Common myeloid progenitor, CD34-positive (primary cell): ENCODE measurements at regions of chr1 and their contacts with region 1.

Region 1: DNA sequence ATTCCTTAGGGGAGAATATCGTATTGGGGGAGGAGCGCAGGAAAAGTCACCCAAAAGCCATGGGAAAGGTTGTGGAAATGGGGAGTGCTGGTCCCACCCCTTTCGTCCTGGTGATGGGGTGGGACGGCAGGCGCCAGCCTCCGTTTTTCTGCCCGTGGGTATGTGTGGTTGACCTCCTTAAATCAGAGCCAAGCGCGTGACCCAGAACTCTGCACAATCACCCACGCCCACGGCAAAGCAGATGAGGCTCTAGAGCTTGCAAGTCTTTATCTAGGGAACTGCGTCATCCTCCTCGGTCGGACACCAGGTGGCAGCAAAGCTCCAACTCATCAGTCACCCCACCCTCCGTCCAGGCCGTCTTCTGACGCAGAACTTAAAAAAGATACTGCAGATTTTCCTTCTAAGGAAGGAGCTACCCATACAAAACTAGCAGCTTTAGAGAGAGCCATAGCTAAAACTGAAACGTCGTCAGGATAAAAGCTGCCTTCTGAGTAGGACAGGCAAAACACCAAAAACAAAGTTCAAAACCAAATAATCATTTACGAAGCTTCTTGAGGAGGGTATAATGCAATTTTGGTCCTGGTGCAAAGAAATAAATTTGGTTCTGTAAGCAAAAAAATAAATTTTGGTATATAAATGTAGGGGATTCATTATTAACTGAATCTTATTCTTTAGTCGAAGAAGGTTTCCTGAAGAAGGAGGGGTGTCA is 62.0 kb downstream of the TBX19 start:
- DNase-seq: peak; percentile 91 to 95 (median 93)
- H3K4me3 ChIP-seq: peak overlapping the region in 5 of 7 experiments; percentile 5 to 49 (median 19)
- H3K27ac ChIP-seq: no peak overlapping the region
- H3K4me1 ChIP-seq: peaks cover 0 to 6% (median 6%) of the 10 kb centered on the region in 4 experiments
- H3K27me3 ChIP-seq: no peaks in the 10 kb centered on the region

Region 2: DNA sequence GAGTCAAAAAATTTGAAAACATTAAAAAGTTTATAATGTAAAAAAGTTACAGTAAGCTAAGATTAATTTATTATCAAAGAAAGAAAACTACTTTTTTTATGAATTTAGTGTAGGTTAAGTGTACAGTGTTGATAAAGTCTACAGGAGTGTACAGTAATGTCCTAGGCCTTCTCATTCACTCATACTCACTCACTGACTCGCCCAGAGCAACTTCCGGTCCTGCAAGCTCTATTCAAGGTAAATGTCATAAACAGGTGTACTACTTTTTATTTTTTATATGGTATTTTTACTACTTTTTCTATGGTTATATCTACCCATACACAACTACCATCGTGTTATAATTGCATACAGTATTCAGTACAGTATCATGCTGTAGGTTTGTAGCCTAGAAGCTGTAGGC is 12.4 kb before region 1 on chr1:
- CTCF ChIA-PET with region 1: interaction called, 13 read pairs
- POLR2A ChIA-PET with region 1: no interaction called
- DNase-seq: no peak
- H3K4me3 ChIP-seq: no peak overlapping the region
- H3K27ac ChIP-seq: no peak overlapping the region
- H3K4me1 ChIP-seq: no peaks in the 10 kb centered on the region
- H3K27me3 ChIP-seq: no peaks in the 10 kb centered on the region

Region 3: GRCh38 chr1:168360151-168361021 is 17.7 kb after region 1 on chr1:
- CTCF ChIA-PET with region 1: interaction called, 38 read pairs
- POLR2A ChIA-PET with region 1: interaction called, 3 read pairs
- DNase-seq: no peak
- H3K4me3 ChIP-seq: no peak overlapping the region
- H3K27ac ChIP-seq: no peak overlapping the region
- H3K4me1 ChIP-seq: peaks cover 0 to 8% (median 0%) of the 10 kb centered on the region in 4 experiments
- H3K27me3 ChIP-seq: no peaks in the 10 kb centered on the region

Region 4: DNA sequence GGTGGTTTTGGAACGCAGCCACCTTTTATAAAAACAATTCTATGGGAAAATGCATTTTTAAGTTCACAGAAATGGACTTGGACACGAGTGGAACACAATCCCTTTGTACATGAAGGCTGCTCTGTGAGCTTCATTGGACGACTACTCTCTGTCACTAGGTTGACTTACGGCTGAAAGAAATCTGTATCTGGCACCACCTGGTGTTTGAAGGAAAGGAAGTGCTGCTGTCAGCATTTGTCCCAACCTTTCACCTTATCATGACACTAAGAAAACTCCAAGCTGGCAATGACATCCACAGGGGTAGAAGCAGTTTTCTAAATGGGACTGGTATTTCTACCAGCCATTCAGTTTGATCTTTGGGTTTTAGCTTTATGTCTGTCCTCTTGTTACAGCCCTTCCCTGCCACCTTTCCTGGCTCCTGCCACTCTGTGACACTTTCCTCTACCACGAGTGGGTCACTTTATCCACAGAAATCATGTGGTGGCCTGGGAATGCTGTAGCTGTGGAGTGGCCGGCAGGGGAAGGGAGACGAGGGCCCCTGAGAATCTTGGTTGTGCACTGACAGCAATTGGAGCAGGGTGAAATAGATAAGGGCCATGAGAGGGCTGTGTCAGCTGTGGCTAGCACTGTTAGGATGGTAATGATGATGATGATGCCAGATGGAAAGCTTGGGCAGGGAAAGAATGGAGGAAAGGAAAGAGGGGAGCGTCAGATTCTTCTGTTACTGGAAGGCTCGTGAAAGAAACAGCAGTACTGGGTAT is 23.2 kb after region 1 on chr1:
- CTCF ChIA-PET with region 1: interaction called, 38 read pairs
- POLR2A ChIA-PET with region 1: interaction called, 3 read pairs
- DNase-seq: peak in 2 of 3 donors; percentile 51 to 58
- H3K4me3 ChIP-seq: no peak overlapping the region
- H3K27ac ChIP-seq: no peak overlapping the region
- H3K4me1 ChIP-seq: peaks cover 0 to 8% (median 0%) of the 10 kb centered on the region in 4 experiments
- H3K27me3 ChIP-seq: no peaks in the 10 kb centered on the region